ENCODE measurements at regions of chr1 and their contacts with region 1.

Region 1: GRCh38 chr1:171741872-171742576 is at the start of gene VAMP4:
- DNase-seq: peak; percentile 92 to 93 (median 93)
- ATAC-seq: peak; percentile 96
- H3K4me3 ChIP-seq: peak within 1 kb of the TSS; percentile 73
- H3K4me1 ChIP-seq: peaks cover 6% of the 10 kb centered on the region
- CTCF ChIP-seq: no peak
- total RNA-seq, gene VAMP4: 9.3 to 15.0 (median 11.1) TPM

Region 2: GRCh38 chr1:171699531-171699930 is 42.5 kb before region 1 on chr1:
- intact Hi-C with region 1: no loop called
- DNase-seq: no peak
- ATAC-seq: no peak
- H3K4me3 ChIP-seq: no peak overlapping the region
- H3K4me1 ChIP-seq: no peaks in the 10 kb centered on the region
- CTCF ChIP-seq: no peak

Region 3: DNA sequence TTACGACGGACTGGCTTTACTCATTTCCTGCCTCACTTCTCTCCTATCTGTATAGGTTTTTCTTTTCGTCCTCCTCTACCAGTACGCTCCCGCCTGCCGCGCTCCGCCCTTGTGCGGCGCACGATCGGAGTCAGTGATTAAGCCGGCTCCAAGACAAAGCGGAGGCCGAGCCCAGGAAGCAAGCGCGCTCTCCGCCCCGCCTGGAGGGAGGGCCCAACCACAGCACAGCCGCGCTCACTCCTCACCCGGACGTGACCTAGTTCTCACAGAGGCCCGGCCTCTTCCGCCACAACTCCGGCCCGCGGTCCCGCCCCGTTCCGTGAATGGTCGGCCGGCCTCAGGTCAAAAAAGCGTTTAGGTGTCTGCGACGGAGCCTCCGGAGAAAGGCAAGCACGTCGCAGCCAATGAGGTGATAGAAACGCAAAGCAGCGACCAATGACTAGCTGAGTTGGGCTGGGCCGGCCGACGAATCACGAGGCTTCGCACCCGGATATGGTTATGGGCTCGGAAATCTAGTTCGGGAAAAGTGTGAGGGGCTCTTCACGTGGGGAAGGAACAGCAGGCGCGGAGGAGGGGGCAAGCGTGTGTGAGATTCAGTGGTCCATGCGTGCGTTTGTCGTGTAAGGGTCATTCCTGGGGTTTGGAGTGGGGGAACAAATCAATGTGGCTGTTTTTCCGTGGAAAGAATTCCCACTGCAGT is 39.3 kb after region 1 on chr1 and contains the start of gene METTL13:
- intact Hi-C with region 1: loop called in 1 of 2 experiments (anchors 5 kb)
- DNase-seq: peak; percentile 98 to 100 (median 99)
- ATAC-seq: peak; percentile 98
- H3K4me3 ChIP-seq: peak within 1 kb of the TSS; percentile 36
- H3K4me1 ChIP-seq: peaks cover 22% of the 10 kb centered on the region
- CTCF ChIP-seq: no peak
- total RNA-seq, gene METTL13: 25.4 to 28.0 (median 25.9) TPM

Region 4: GRCh38 chr1:172239901-172240300 is 497.9 kb after region 1 on chr1:
- intact Hi-C with region 1: no loop called
- DNase-seq: no peak
- ATAC-seq: no peak
- H3K4me3 ChIP-seq: no peak overlapping the region
- H3K4me1 ChIP-seq: no peaks in the 10 kb centered on the region
- CTCF ChIP-seq: no peak